ENCODE measurements at regions of chr13 and their contacts with region 1.

Region 1: DNA sequence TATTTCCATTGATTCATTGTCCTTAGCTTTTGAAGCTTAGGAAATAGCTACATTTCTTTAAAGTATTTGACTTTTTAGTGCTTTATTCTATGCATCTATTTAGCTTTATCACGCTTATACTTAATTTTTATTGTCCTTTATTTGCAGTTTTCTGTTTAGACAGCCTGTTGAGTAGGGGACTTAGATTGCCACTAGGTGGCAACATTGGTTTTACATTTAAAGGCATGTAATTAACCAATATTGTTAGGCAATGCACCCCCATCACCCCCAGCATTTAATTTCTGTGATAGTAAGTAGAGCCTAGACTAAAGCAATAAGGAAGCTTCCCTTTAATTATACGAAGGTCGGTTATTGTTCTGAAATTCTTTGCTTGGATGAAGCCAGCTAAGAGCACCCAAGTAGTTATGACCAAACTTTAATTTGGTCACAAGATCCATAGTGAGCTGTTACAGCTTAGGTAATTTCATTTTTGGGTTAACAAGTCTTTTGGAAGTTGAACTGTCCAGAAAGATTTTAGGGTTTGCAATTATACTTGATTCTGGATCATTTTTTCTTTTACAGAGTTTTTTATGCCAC is 36.5 kb downstream of the B3GLCT start:
- DNase-seq: no peak
- ATAC-seq: no peak
- H3K4me3 Mint-ChIP-seq: no peak overlapping the region
- H3K27ac Mint-ChIP-seq: no peak overlapping the region
- H3K4me1 Mint-ChIP-seq: no peaks in the 10 kb centered on the region
- H3K27me3 Mint-ChIP-seq: no peaks in the 10 kb centered on the region

Region 2: DNA sequence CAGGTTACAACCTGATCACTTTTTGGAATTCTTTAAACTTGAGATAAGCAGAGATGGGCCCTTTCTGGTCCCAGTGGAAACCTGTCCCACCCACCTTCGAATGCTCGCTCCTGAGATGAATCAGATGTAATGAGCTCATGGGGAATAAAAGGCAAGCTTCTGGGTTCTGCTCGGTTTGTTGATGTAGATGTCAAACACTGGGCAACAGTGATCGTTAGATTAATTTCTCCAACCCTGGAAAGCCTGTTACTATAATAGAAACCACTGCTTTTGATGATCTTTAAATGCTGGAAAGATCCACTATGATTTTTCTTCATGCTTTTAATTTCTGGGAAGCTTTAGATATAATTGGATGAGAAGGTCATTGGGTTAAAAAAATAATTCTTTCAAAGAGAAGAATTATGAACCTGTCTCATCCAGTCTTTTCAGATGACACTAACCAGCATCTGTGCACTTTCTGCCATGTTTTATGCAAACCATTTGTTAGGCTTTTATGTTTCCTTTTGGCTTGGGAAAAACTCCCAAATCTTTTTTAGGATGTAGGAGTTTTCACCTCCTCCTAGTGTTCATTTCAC is 12.8 kb after region 1 on chr13:
- CTCF ChIA-PET with region 1: interaction called, 24 read pairs
- POLR2A ChIA-PET with region 1: interaction called, 3 read pairs
- DNase-seq: no peak
- ATAC-seq: no peak
- H3K4me3 Mint-ChIP-seq: no peak overlapping the region
- H3K27ac Mint-ChIP-seq: no peak overlapping the region
- H3K4me1 Mint-ChIP-seq: no peaks in the 10 kb centered on the region
- H3K27me3 Mint-ChIP-seq: no peaks in the 10 kb centered on the region

Region 3: GRCh38 chr13:31424117-31424729 is 187.9 kb after region 1 on chr13:
- CTCF ChIA-PET with region 1: interaction called, 72 read pairs
- POLR2A ChIA-PET with region 1: no interaction called
- DNase-seq: peak; percentile 69
- ATAC-seq: peak; percentile 90
- H3K4me3 Mint-ChIP-seq: no peak overlapping the region
- H3K27ac Mint-ChIP-seq: no peak overlapping the region
- H3K4me1 Mint-ChIP-seq: no peaks in the 10 kb centered on the region
- H3K27me3 Mint-ChIP-seq: peaks cover 5% of the 10 kb centered on the region